ENCODE measurements at regions of chr11 and their contacts with region 1.

Region 1: DNA sequence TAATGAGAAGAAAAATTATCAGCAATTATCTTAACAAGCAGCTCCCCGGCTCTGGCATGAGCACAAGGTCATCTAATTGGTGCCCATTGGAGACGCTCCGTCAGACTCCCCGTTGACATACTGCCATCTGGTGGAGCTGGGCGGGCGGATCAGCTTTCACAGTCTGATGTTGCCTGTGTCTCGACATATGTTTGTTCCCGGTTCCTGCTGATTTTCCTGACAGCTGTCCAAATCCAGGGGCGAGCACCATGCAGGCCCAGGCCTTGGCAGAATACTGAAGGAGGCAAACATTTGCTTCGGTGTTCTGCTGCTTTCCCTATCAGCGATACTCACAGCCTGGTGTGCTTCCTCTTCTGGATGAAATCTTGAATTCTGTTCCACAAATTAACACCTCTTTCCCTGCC is 43.8 kb upstream of the BARX2 start:
- DNase-seq: peak; percentile 95
- ATAC-seq: peak; percentile 97
- H3K4me3 ChIP-seq: no peak overlapping the region
- H3K27ac ChIP-seq: no peak overlapping the region
- H3K4me1 ChIP-seq: peaks cover 11% of the 10 kb centered on the region; the same call in 1 of the 2 replicates
- H3K27me3 ChIP-seq: no peaks in the 10 kb centered on the region
- CTCF ChIP-seq: peak; percentile 97

Region 2: GRCh38 chr11:128095466-128095981 is 1236.3 kb before region 1 on chr11:
- CTCF ChIA-PET with region 1: no interaction called
- POLR2A ChIA-PET with region 1: no interaction called
- intact Hi-C with region 1: no loop called
- DNase-seq: peak; percentile 88
- ATAC-seq: peak; percentile 77
- H3K4me3 ChIP-seq: no peak overlapping the region
- H3K27ac ChIP-seq: peak overlapping the region; percentile 27
- H3K4me1 ChIP-seq: peaks cover 7% of the 10 kb centered on the region
- H3K27me3 ChIP-seq: 0 out of 2 replicates have a peak, but pooled peaks cover 12% of the 10 kb centered on the region
- CTCF ChIP-seq: peak; percentile 71

Region 3: DNA sequence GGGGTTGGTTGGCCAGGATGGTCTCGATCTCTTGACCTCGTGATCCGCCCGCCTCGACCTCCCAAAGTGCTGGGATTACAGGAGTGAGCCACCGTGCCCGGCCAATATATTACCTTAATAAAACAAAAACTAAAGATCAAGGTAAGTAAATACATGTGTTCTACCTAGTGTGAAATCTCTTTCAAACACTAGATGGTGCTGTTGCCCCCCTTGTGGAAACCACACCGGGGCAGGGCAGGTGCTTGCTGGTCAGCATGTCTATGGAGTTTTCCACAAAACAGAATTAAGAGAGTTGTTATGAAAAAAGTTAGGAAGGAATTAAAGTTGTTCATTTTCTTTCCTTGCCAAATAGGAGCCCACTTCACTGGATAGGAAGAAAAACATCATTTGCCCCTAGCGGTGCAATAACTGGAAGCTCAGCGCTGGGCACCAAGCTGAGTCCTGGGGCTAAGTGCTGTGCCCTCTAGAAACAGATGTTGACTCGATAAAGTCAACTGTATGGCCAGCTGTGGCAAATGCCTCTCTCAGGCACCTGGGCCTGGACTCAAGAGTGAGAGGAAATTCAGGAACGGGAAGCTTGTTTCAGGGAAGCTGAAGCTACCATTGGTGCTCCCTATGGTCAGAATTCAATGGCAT is 447.1 kb before region 1 on chr11:
- CTCF ChIA-PET with region 1: no interaction called
- POLR2A ChIA-PET with region 1: no interaction called
- intact Hi-C with region 1: loop called (anchors 5 kb)
- DNase-seq: peak; percentile 93
- ATAC-seq: peak; percentile 92
- H3K4me3 ChIP-seq: peak overlapping the region; percentile 45; the same call in 1 of the 2 replicates
- H3K27ac ChIP-seq: no peak overlapping the region
- H3K4me1 ChIP-seq: no peaks in the 10 kb centered on the region
- H3K27me3 ChIP-seq: peaks cover 15% of the 10 kb centered on the region; the same call in 1 of the 2 replicates
- CTCF ChIP-seq: peak; percentile 91

Region 4: DNA sequence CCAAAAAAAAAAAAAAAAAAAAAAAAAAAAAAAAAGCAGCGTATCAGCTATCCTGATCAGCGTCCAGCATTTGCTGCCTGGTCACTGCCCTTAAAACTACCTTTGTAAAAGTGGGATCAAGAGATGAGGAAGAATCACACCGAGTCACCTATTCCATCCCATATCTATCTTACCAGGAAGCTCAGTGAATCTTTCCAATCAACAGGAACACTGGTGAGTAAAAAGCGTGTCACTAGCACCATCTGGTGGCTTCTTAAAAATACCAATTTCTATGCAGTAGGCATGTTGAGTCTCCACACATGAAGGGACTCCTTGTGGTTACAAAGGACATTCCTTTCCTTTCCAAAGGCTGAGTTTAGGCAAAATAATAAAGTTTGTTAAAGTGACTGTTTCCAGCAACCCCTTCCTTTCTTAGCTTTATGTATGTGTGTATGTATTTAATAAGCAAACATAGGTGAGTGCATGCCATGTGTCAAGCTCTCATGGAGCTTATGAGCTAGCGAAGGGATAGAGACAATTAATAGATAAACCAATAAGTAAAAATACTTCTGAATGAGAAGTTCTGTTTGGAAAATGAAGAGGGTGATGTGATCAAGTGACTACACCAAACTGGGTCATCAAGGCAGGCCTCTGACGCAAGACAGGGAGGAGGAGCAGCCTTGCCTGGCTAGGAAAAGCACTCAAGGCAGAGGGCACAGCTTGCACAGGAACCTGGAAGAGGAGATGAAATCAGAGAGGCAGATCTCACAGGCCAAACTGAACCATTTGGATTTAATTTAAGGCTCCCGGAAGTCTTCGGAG is 375.3 kb before region 1 on chr11:
- CTCF ChIA-PET with region 1: no interaction called
- POLR2A ChIA-PET with region 1: no interaction called
- intact Hi-C with region 1: loop called (anchors 2 kb)
- DNase-seq: peak; percentile 95
- ATAC-seq: peak; percentile 93
- H3K4me3 ChIP-seq: no peak overlapping the region
- H3K27ac ChIP-seq: no peak overlapping the region
- H3K4me1 ChIP-seq: no peaks in the 10 kb centered on the region
- H3K27me3 ChIP-seq: no peaks in the 10 kb centered on the region
- CTCF ChIP-seq: peak; percentile 94

Region 5: GRCh38 chr11:129023970-129024676 is 307.8 kb before region 1 on chr11:
- CTCF ChIA-PET with region 1: no interaction called
- POLR2A ChIA-PET with region 1: no interaction called
- intact Hi-C with region 1: loop called (anchors 5 kb)
- DNase-seq: peak; percentile 96
- ATAC-seq: peak; percentile 96
- H3K4me3 ChIP-seq: peak overlapping the region; percentile 61
- H3K27ac ChIP-seq: peak overlapping the region; percentile 82
- H3K4me1 ChIP-seq: peaks cover 48% of the 10 kb centered on the region
- H3K27me3 ChIP-seq: no peaks in the 10 kb centered on the region
- CTCF ChIP-seq: no peak

Region 6: DNA sequence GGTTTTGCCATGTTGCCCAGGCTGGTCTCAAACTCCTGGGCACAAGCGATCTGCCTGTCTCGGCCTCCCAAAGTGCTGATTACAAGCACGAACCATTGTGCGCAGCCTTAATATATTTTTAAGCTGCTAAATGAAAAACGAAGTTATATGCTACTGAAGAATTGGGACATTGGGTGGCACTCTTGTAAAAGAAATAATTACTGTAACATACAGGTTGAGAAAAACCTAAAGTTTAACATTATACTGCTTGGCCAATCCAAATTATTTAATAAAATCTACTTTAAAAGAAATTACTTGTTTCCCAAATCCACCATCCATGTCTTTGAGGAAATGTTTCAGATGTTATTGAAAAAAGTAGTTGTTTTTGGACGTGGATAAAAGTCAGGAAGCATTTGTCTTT is 101.9 kb before region 1 on chr11:
- CTCF ChIA-PET with region 1: interaction called, 11 read pairs
- POLR2A ChIA-PET with region 1: no interaction called
- intact Hi-C with region 1: loop called (anchors 1 kb)
- DNase-seq: peak; percentile 43
- ATAC-seq: peak; percentile 44; the same call in 1 of the 2 replicates
- H3K4me3 ChIP-seq: no peak overlapping the region
- H3K27ac ChIP-seq: no peak overlapping the region
- H3K4me1 ChIP-seq: peaks cover 10% of the 10 kb centered on the region
- H3K27me3 ChIP-seq: no peaks in the 10 kb centered on the region
- CTCF ChIP-seq: peak; percentile 55

Region 7: DNA sequence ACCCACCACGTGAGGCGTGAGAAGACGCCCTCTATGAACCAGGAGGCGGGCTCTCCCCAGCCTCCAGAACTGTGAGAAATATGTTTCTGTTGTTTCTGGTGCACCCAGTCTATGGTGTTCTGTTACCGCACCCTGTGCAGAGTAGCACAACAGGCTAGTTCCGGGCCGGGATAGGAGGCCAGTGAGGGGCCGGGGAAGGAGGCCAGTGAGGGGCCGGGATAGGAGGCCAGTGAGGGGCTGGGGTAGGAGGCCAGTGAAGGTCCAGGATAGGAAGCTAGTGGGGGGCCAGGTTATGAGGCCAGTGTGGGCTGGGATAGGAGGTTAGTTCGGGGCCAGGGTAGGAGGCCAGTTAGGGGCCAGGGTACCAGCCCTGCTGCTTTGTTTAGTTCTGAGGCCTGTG is 248.4 kb after region 1 on chr11:
- CTCF ChIA-PET with region 1: no interaction called
- POLR2A ChIA-PET with region 1: no interaction called
- intact Hi-C with region 1: no loop called
- DNase-seq: no peak
- ATAC-seq: no peak
- H3K4me3 ChIP-seq: no peak overlapping the region
- H3K27ac ChIP-seq: no peak overlapping the region
- H3K4me1 ChIP-seq: no peaks in the 10 kb centered on the region
- H3K27me3 ChIP-seq: peaks cover 60% of the 10 kb centered on the region
- CTCF ChIP-seq: no peak

Region 8: DNA sequence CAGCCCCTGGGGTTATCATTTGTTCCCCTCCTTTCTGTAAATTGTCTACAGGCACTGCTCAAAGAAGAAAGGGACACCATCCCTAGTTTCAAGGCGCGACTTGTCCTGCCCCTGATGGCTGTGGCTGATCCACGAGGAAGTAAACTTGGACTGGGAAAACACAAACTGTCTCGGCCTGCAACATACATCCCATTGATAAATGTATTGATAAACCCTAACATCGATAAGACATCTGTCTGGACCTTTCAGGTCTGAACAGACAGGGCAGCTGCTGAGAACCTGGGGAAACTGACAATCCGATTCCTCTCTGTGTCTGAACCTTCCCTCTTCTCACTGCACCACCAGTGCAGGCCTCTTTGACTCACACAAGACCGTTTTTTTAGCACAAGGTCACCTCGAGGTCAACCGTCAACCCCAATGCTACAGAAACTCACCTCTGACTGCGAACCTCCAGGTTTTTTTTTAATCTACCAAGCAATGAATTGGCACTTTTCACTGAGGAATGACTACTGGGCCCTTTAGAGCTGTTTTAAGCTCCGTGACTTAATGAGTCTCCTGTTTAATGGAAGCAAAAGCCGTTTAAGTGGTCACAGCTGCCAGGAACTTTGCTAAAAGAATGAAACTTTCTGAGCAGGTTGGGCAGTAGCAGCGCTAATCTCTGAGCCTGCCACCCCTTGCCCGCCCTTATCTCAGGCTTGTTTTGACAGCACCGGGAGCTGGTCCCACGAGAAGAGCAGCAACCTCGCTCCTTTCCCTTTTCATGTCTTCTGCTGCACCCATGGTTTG is 280.0 kb after region 1 on chr11:
- CTCF ChIA-PET with region 1: no interaction called
- POLR2A ChIA-PET with region 1: no interaction called
- intact Hi-C with region 1: no loop called
- DNase-seq: no peak
- ATAC-seq: no peak
- H3K4me3 ChIP-seq: no peak overlapping the region
- H3K27ac ChIP-seq: no peak overlapping the region
- H3K4me1 ChIP-seq: peaks cover 21% of the 10 kb centered on the region
- H3K27me3 ChIP-seq: no peaks in the 10 kb centered on the region
- CTCF ChIP-seq: no peak

Measured in PC-3 (cell line).